ENCODE measurements at regions of chr6 and their contacts with region 1.

Region 1: GRCh38 chr6:153231048-153231646 is 100.1 kb upstream of the RGS17 start:
- DNase-seq: peak; percentile 40
- ATAC-seq: peak; percentile 79
- H3K4me3 ChIP-seq: no peak overlapping the region
- H3K27ac ChIP-seq: no peak overlapping the region
- H3K4me1 ChIP-seq: no peaks in the 10 kb centered on the region
- H3K27me3 ChIP-seq: no peaks in the 10 kb centered on the region
- CTCF ChIP-seq: peak; percentile 94
- EP300 ChIP-seq: no peak
- POLR2A ChIP-seq: no peak
- RAD21 ChIP-seq: peak; percentile 80

Region 2: DNA sequence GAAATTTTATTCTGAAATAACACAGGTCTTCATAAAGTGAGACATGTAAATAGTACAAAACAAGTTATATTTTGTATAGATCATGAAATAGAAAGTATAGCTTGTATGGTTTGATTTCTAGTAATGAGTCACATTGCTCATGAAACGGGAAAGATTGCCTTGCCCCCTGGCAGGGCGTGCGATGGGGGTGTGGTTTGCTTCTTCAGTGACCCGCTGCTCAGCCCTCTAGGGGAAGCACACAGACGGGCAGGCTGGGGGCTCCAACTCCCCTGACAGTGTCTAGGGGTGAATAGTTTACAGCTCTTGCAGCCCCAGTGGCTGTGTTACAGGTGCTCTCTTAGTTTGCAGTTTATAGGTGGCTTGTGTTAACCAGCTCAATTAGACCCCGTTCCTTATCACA is 70.5 kb after region 1 on chr6:
- CTCF ChIA-PET with region 1: no interaction called
- POLR2A ChIA-PET with region 1: no interaction called
- in situ Hi-C with region 1: no loop called
- intact Hi-C with region 1: no loop called
- DNase-seq: no peak
- ATAC-seq: peak; percentile 76
- H3K4me3 ChIP-seq: no peak overlapping the region
- H3K27ac ChIP-seq: no peak overlapping the region
- H3K4me1 ChIP-seq: no peaks in the 10 kb centered on the region
- H3K27me3 ChIP-seq: no peaks in the 10 kb centered on the region
- CTCF ChIP-seq: no peak
- EP300 ChIP-seq: no peak
- POLR2A ChIP-seq: no peak
- RAD21 ChIP-seq: no peak

Region 3: GRCh38 chr6:153312641-153313040 is 81.5 kb after region 1 on chr6:
- CTCF ChIA-PET with region 1: interaction called, 8 read pairs
- POLR2A ChIA-PET with region 1: no interaction called
- in situ Hi-C with region 1: loop called (anchors 5 kb)
- intact Hi-C with region 1: loop called (anchors 1 kb)
- DNase-seq: peak; percentile 31
- ATAC-seq: peak; percentile 79
- H3K4me3 ChIP-seq: no peak overlapping the region
- H3K27ac ChIP-seq: no peak overlapping the region
- H3K4me1 ChIP-seq: no peaks in the 10 kb centered on the region
- H3K27me3 ChIP-seq: no peaks in the 10 kb centered on the region
- CTCF ChIP-seq: peak; percentile 71
- EP300 ChIP-seq: no peak
- POLR2A ChIP-seq: no peak
- RAD21 ChIP-seq: peak; percentile 38; the same call in 1 of the 2 replicates

Region 4: GRCh38 chr6:153511896-153512496 is 280.8 kb after region 1 on chr6:
- CTCF ChIA-PET with region 1: interaction called, 4 read pairs
- POLR2A ChIA-PET with region 1: no interaction called
- in situ Hi-C with region 1: no loop called
- intact Hi-C with region 1: loop called (anchors 1 kb)
- DNase-seq: peak; percentile 29
- ATAC-seq: peak; percentile 82
- H3K4me3 ChIP-seq: no peak overlapping the region
- H3K27ac ChIP-seq: no peak overlapping the region
- H3K4me1 ChIP-seq: no peaks in the 10 kb centered on the region
- H3K27me3 ChIP-seq: no peaks in the 10 kb centered on the region
- CTCF ChIP-seq: peak; percentile 54
- EP300 ChIP-seq: no peak
- POLR2A ChIP-seq: no peak
- RAD21 ChIP-seq: no peak

Region 5: DNA sequence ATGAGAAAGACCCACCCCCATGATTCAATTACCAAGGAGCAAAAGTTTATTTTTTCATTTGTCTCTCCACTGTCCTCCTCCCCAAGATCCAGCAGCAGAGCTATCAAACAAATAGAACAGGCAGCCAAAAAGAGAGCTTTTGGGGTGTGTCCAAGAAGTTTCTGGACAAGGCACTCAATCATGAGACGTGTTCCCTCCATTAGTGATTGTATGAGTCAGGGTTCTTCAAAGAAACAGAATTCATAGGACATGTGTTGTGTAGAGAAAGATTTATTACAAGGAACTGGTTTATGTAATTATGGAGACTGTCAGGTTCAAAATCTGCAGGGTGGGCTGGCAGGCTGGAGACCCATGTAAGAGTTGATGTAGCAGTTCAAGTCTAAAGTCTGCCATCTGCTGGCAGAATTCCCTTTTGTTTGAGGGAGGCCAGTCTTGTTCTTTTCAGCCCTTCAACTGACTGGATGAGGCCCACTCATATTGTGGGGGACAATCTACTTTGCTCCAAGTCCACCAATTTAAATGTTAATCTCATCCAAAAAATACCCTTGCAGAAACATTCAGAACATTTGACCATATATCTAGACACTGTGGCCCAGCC is 559.8 kb after region 1 on chr6:
- CTCF ChIA-PET with region 1: no interaction called
- POLR2A ChIA-PET with region 1: no interaction called
- in situ Hi-C with region 1: no loop called
- intact Hi-C with region 1: loop called (anchors 1 kb)
- DNase-seq: peak; percentile 37
- ATAC-seq: peak; percentile 60
- H3K4me3 ChIP-seq: no peak overlapping the region
- H3K27ac ChIP-seq: no peak overlapping the region
- H3K4me1 ChIP-seq: peaks cover 7% of the 10 kb centered on the region
- H3K27me3 ChIP-seq: no peaks in the 10 kb centered on the region
- CTCF ChIP-seq: peak; percentile 50
- EP300 ChIP-seq: no peak
- POLR2A ChIP-seq: no peak
- RAD21 ChIP-seq: no peak

Region 6: DNA sequence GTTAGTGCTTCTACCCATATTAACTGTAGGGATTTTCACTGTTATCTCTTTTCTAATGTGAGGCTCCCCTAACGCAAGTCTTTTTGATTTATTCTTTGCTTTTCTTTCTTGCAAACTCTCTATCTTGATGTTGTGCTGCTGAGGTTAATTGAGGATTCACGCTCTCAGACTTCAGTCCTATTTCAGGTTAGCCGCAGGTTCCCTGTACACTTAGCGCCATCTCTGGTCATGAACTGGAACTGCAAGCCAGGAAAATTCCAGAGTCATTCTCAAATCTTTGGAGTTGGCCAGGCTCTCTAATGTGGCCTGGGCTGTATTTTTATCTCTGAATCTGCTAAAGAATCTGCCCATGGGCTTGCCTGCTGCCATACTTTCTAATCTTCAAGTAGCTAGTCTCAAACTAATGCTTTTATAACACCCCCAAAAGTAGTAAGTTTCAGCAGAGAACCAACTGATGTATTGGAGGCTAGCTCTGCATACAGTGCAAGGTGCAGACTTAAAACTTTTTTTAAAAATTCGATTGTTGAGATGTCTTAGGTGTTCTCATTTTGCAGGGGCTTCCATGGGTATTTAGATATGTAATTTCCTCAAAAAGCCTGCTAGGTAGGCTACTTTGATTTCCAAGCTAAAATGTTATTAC is 716.8 kb after region 1 on chr6:
- CTCF ChIA-PET with region 1: interaction called, 5 read pairs
- POLR2A ChIA-PET with region 1: no interaction called
- in situ Hi-C with region 1: loop called (anchors 25 kb)
- intact Hi-C with region 1: loop called (anchors 1 kb)
- DNase-seq: peak; percentile 20
- ATAC-seq: peak; percentile 85
- H3K4me3 ChIP-seq: no peak overlapping the region
- H3K27ac ChIP-seq: no peak overlapping the region
- H3K4me1 ChIP-seq: no peaks in the 10 kb centered on the region
- H3K27me3 ChIP-seq: no peaks in the 10 kb centered on the region
- CTCF ChIP-seq: peak; percentile 85
- EP300 ChIP-seq: no peak
- POLR2A ChIP-seq: no peak
- RAD21 ChIP-seq: peak; percentile 47

Region 7: DNA sequence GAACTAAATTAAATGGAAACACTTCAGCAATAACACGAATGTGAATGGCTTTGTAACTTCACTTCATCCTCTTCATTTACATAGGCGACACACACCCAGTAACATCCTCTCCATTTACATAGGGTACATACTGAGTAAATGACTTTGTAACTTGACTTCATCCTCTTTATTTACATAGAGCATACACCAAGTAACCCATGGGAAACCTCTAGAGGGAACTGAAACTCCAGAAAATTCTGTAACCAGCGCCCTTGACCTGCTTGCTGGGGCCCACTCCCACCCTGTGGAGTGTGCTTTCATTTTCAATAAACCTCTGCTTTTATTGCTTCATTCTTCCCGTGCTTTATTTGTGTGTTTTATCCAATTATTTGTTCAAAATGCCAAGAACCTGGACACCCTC is 726.2 kb after region 1 on chr6:
- CTCF ChIA-PET with region 1: no interaction called
- POLR2A ChIA-PET with region 1: no interaction called
- in situ Hi-C with region 1: loop called (anchors 25 kb)
- intact Hi-C with region 1: no loop called
- DNase-seq: no peak
- ATAC-seq: no peak
- H3K4me3 ChIP-seq: no peak overlapping the region
- H3K27ac ChIP-seq: no peak overlapping the region
- H3K4me1 ChIP-seq: no peaks in the 10 kb centered on the region
- H3K27me3 ChIP-seq: no peaks in the 10 kb centered on the region
- CTCF ChIP-seq: no peak
- EP300 ChIP-seq: no peak
- POLR2A ChIP-seq: no peak
- RAD21 ChIP-seq: no peak